Naive thymus-derived CD4-positive, alpha-beta T cell (primary cell): ENCODE measurements at regions of chr3 and their contacts with region 1.

Region 1: DNA sequence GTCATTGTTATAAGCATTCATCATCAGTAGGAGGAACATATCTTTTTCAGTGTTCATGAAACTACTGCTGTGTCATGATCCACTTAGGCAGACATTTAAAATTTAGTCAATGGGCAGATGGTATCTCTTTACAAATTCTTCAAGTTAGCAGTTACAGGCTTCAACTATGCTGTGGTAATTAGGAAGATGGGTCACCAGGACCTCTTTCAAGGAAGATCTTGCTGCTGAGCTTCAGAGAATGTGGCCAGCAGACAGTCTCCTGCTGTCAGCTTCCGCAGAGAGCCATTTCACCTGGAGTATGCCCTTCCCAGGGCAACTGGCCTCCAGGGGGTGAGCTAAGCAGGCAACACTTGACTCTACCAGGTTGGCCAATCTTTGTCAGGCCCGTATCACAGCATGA is 19.4 kb downstream of the IFT57 start:
- DNase-seq: no peak
- ATAC-seq: no peak
- H3K4me3 ChIP-seq: no peak overlapping the region
- H3K4me3 Mint-ChIP-seq: no peak overlapping the region
- H3K27ac ChIP-seq: no peak overlapping the region
- H3K27ac Mint-ChIP-seq: no peak overlapping the region
- H3K4me1 ChIP-seq: no peaks in the 10 kb centered on the region
- H3K4me1 Mint-ChIP-seq: peaks cover 3 to 22% (median 17%) of the 10 kb centered on the region in 7 donors
- H3K27me3 ChIP-seq: no peaks in the 10 kb centered on the region
- H3K27me3 Mint-ChIP-seq: no peaks in the 10 kb centered on the region

Region 2: GRCh38 chr3:108159865-108160264 is 43.0 kb before region 1 on chr3:
- CTCF ChIA-PET with region 1: no interaction called
- POLR2A ChIA-PET with region 1: no interaction called
- intact Hi-C with region 1: loop called in 1 of 2 experiments (anchors 5 kb)
- DNase-seq: no peak
- ATAC-seq: no peak
- H3K4me3 ChIP-seq: no peak overlapping the region
- H3K4me3 Mint-ChIP-seq: no peak overlapping the region
- H3K27ac ChIP-seq: no peak overlapping the region
- H3K27ac Mint-ChIP-seq: peak overlapping the region in 3 of 9 donors; percentile 2 to 38 (median 35)
- H3K4me1 ChIP-seq: no peaks in the 10 kb centered on the region
- H3K4me1 Mint-ChIP-seq: peaks cover 0 to 9% (median 7%) of the 10 kb centered on the region in 7 donors
- H3K27me3 ChIP-seq: no peaks in the 10 kb centered on the region
- H3K27me3 Mint-ChIP-seq: no peaks in the 10 kb centered on the region